WTC11 (cell line): ENCODE measurements at regions of chr3 and their contacts with region 1.

Region 1: GRCh38 chr3:15332405-15333098 is at the start of gene SH3BP5:
- DNase-seq: peak; percentile 79
- ATAC-seq: peak; percentile 92
- H3K4me3 Mint-ChIP-seq: peak within 1 kb of the TSS; percentile 95
- H3K27ac Mint-ChIP-seq: peak within 1 kb of the TSS; percentile 87
- H3K4me1 Mint-ChIP-seq: peaks cover 33% of the 10 kb centered on the region
- H3K27me3 Mint-ChIP-seq: peaks cover 34% of the 10 kb centered on the region
- CTCF ChIP-seq: peak; percentile 51; the same call in 1 of the 2 replicates
- total RNA-seq, gene SH3BP5: 5.1 to 7.2 TPM (median 5.9 TPM) in 3 replicates

Region 2: GRCh38 chr3:15148614-15149013 is 183.9 kb before region 1 on chr3:
- CTCF ChIA-PET with region 1: no interaction called
- POLR2A ChIA-PET with region 1: no interaction called
- DNase-seq: peak; percentile 55
- ATAC-seq: peak; percentile 100
- H3K4me3 Mint-ChIP-seq: no peak overlapping the region
- H3K27ac Mint-ChIP-seq: no peak overlapping the region
- H3K4me1 Mint-ChIP-seq: peaks cover 4% of the 10 kb centered on the region; the same call in 1 of the 2 replicates
- H3K27me3 Mint-ChIP-seq: peaks cover 13% of the 10 kb centered on the region
- CTCF ChIP-seq: no peak

Region 3: GRCh38 chr3:15276028-15276724 is 56.4 kb before region 1 on chr3:
- CTCF ChIA-PET with region 1: interaction called, 10 read pairs
- POLR2A ChIA-PET with region 1: no interaction called
- DNase-seq: no peak
- ATAC-seq: no peak
- H3K4me3 Mint-ChIP-seq: no peak overlapping the region
- H3K27ac Mint-ChIP-seq: no peak overlapping the region
- H3K4me1 Mint-ChIP-seq: peaks cover 12% of the 10 kb centered on the region
- H3K27me3 Mint-ChIP-seq: no peaks in the 10 kb centered on the region
- CTCF ChIP-seq: no peak

Region 4: GRCh38 chr3:15345608-15346137 is 13.1 kb after region 1 on chr3:
- CTCF ChIA-PET with region 1: interaction called, 15 read pairs
- POLR2A ChIA-PET with region 1: interaction called, 4 read pairs
- DNase-seq: no peak
- ATAC-seq: no peak
- H3K4me3 Mint-ChIP-seq: no peak overlapping the region
- H3K27ac Mint-ChIP-seq: no peak overlapping the region
- H3K4me1 Mint-ChIP-seq: no peaks in the 10 kb centered on the region
- H3K27me3 Mint-ChIP-seq: peaks cover 3% of the 10 kb centered on the region
- CTCF ChIP-seq: no peak

Region 5: DNA sequence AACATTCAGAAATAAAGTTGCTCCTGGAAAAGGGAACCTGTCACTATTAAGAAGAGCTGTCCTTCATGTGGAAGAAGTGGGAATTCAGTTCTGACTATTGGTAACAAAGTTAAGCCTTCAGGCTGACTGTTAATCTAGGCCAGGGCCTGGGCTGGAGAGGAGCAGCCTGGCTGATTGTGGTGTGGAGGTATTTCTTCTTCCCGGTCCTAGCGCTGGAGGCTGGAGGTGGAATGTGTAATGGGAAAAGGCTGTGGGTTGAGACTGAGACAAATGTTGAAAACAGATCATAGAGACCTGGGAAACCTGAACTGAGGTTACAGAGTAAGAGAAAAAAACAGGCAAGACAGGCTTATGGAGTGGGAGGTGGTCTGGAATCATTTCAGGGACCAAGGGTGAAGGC is 23.6 kb after region 1 on chr3:
- CTCF ChIA-PET with region 1: interaction called, 10 read pairs
- POLR2A ChIA-PET with region 1: no interaction called
- DNase-seq: no peak
- ATAC-seq: peak; percentile 60
- H3K4me3 Mint-ChIP-seq: no peak overlapping the region
- H3K27ac Mint-ChIP-seq: no peak overlapping the region
- H3K4me1 Mint-ChIP-seq: peaks cover 15% of the 10 kb centered on the region
- H3K27me3 Mint-ChIP-seq: 0 out of 2 replicates have a peak, but pooled peaks cover 3% of the 10 kb centered on the region
- CTCF ChIP-seq: no peak